Activated CD4-positive, alpha-beta T cell treated with anti-CD3 and anti-CD28 coated beads for 36 hours (primary cell): ENCODE measurements at regions of chr2 and their contacts with region 1.

Region 1: DNA sequence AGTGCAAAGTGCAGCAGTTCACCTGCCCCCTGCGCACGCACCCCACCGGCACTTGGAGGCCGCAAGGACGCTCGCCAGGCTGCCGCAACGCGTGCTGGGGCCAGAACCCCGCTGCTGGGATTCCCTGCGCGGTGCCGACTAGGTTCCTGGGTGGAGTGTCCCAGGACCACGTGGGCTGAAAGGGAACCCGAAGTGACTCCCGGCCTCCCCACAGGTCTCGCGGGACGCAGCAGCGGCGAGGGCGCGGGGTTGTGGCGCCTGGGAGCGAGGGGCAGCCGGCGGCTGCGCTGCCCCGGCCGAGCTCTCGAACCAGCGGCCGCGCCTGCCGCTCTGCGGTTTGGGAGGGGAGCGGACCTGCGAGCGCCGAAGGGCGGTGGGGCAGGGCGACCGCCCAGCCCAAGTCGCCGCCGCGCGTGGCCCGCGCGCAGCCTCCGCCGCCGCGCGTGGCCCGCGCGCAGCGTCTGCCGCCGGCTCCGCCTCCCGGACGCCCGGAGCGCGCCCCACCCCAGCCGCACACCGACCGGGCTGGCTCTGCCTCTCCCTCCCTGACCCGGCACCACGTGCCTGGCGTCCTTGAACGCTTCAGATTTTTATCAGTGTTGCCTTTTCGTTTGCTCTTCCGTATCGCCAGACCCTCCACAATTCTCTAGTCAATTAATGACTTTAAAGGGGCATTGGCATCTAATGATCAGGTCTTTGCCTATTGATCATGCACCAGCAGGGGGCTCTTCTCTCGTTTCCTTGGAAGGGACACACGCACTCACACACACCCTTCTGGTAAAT is at the start of gene FTCDNL1:
- DNase-seq: peak; percentile 83
- ATAC-seq: peak; percentile 97
- H3K4me3 Mint-ChIP-seq: peak within 1 kb of the TSS; percentile 87
- H3K27ac Mint-ChIP-seq: peak within 1 kb of the TSS; percentile 93
- H3K4me1 Mint-ChIP-seq: peaks cover 6% of the 10 kb centered on the region
- H3K27me3 Mint-ChIP-seq: peaks cover 2% of the 10 kb centered on the region
- total RNA-seq, gene FTCDNL1: 3.8 to 4.3 TPM

Region 2: DNA sequence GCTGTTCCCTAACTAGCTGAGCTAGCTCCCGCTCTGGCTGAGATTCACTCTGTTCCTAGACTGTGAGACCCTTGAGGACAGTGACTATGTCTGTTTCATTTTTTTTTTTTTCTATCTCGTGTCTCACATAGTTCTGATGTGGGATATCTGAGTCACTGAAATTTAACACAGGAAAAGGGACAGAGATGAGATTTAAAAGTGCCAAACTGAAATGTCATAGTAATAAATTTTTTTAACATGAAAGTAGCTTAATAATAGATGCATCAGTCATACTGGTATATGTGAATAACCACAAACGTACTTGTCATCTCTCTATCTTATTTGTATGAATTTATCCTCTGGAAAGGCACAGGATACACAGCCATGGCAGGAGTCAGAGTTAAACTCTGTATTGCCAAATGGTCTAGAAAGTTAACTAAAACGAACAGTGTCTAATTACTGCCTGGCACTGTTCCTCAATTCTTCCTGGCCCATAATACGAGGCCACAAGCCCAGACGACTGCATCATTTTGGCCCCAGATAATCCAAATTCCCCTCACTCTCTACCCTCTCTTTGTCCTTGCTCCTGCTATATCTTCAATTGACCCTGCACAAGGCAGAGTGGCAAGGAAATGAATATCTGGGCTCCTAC is 480.6 kb before region 1 on chr2:
- CTCF ChIA-PET with region 1: no interaction called
- POLR2A ChIA-PET with region 1: no interaction called
- intact Hi-C with region 1: no loop called
- DNase-seq: no peak
- ATAC-seq: no peak
- H3K4me3 Mint-ChIP-seq: no peak overlapping the region
- H3K27ac Mint-ChIP-seq: no peak overlapping the region
- H3K4me1 Mint-ChIP-seq: no peaks in the 10 kb centered on the region
- H3K27me3 Mint-ChIP-seq: peaks cover 21% of the 10 kb centered on the region

Region 3: GRCh38 chr2:199955339-199956261 is 104.7 kb after region 1 on chr2 and contains the starts of genes MAIP1 and TYW5:
- CTCF ChIA-PET with region 1: no interaction called
- POLR2A ChIA-PET with region 1: interaction called, 4 read pairs
- intact Hi-C with region 1: loop called in 1 of 2 experiments (anchors 1 kb)
- DNase-seq: peak; percentile 87
- ATAC-seq: peak; percentile 87
- H3K4me3 Mint-ChIP-seq: peak within 1 kb of the TSS; percentile 99
- H3K27ac Mint-ChIP-seq: peak within 1 kb of the TSS; percentile 95
- H3K4me1 Mint-ChIP-seq: peaks cover 50% of the 10 kb centered on the region
- H3K27me3 Mint-ChIP-seq: no peaks in the 10 kb centered on the region
- total RNA-seq, gene MAIP1: 26.1 to 27.5 TPM
- total RNA-seq, gene TYW5: 9.6 to 10.1 TPM